Calu3 (cell line): ENCODE measurements at regions of chr2 and their contacts with region 1.

Region 1: GRCh38 chr2:70871398-70872211 is 36.0 kb upstream of the CD207 start:
- DNase-seq: peak; percentile 92
- H3K4me3 Mint-ChIP-seq: peak overlapping the region; percentile 36
- H3K27ac Mint-ChIP-seq: no peak overlapping the region
- H3K4me1 Mint-ChIP-seq: peaks cover 9% of the 10 kb centered on the region
- H3K27me3 Mint-ChIP-seq: peaks cover 57% of the 10 kb centered on the region
- CTCF ChIP-seq: peak; percentile 97

Region 2: DNA sequence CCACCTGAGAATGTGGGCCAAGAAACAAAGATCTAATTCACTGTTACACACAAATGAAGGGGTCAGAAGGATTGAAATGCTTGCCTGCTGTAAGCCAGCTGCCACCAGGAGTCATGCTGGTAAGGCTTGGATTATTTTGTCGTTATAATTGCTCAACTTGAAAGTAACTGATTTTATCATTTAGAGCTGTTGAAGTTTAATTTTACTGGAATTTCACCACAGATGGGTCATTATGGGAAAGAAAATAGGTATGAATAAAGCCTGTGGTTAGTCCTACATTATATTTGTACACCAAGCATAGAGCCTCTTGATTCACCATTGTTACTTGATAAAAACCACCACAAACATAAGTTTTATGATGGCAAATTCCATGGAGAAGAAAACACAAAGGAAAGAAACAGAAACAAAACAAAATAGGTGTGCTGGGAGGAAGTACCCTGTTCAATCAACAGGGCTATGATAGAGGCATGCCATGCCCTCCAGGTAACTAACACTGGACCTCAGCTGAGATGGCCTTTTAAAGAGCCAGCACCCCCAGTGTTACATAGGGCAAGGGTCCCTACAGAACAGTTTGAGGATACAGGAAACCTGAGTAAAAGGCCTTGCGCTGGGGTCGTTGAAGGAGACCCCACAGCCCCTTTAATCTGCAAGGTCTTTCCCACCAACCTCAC is 54.2 kb before region 1 on chr2:
- CTCF ChIA-PET with region 1: no interaction called
- intact Hi-C with region 1: no loop called
- DNase-seq: no peak
- H3K4me3 Mint-ChIP-seq: no peak overlapping the region
- H3K27ac Mint-ChIP-seq: no peak overlapping the region
- H3K4me1 Mint-ChIP-seq: no peaks in the 10 kb centered on the region
- H3K27me3 Mint-ChIP-seq: peaks cover 96% of the 10 kb centered on the region
- CTCF ChIP-seq: no peak

Region 3: GRCh38 chr2:70919672-70920366 is 48.2 kb after region 1 on chr2:
- CTCF ChIA-PET with region 1: interaction called, 10 read pairs
- intact Hi-C with region 1: loop called (anchors 2 kb)
- DNase-seq: peak; percentile 92
- H3K4me3 Mint-ChIP-seq: no peak overlapping the region
- H3K27ac Mint-ChIP-seq: no peak overlapping the region
- H3K4me1 Mint-ChIP-seq: no peaks in the 10 kb centered on the region
- H3K27me3 Mint-ChIP-seq: peaks cover 13% of the 10 kb centered on the region
- CTCF ChIP-seq: peak; percentile 74